WTC11 (cell line): ENCODE measurements at regions of chr2 and their contacts with region 1.

Region 1: GRCh38 chr2:35428548-35428947 is 927.0 kb upstream of the CRIM1 start:
- DNase-seq: peak; percentile 78
- ATAC-seq: peak; percentile 84
- H3K4me3 Mint-ChIP-seq: no peak overlapping the region
- H3K27ac Mint-ChIP-seq: no peak overlapping the region
- H3K4me1 Mint-ChIP-seq: 0 out of 2 replicates have a peak, but pooled peaks cover 4% of the 10 kb centered on the region
- H3K27me3 Mint-ChIP-seq: no peaks in the 10 kb centered on the region
- CTCF ChIP-seq: peak; percentile 36; the same call in 1 of the 2 replicates

Region 2: DNA sequence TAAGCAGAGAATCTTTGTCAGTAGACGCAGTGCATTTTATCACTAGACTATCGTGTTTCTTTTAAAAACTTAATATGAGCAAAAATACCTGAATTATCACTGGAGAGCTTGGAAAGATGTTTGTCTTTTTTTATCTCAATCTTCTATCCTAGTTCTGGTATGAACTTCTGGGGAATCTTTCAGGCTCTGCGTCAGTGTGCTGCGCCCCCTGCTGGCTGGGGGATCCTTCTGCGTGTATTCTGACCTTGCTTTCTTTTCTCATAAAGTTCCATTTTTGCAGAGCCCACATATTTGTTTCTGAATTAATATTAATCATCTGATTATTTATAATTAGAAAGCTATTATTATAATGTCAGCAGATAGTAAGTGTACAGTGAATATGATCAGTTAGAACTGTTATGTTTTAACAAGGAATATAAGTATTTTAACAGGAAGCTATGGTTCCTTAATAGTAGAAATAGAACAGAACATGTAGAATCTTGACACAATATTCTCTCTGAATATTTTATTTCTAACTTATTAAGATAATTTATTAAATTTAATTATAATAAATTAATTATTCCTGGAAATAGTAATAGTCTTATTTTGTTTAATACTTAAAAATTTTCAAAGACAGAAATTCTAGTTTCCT is 18.0 kb before region 1 on chr2:
- CTCF ChIA-PET with region 1: interaction called, 11 read pairs
- POLR2A ChIA-PET with region 1: no interaction called
- DNase-seq: peak; percentile 65
- ATAC-seq: no peak
- H3K4me3 Mint-ChIP-seq: no peak overlapping the region
- H3K27ac Mint-ChIP-seq: no peak overlapping the region
- H3K4me1 Mint-ChIP-seq: peaks cover 20% of the 10 kb centered on the region
- H3K27me3 Mint-ChIP-seq: no peaks in the 10 kb centered on the region; the same call in 1 of the 2 replicates
- CTCF ChIP-seq: peak; percentile 94